Mucosa of descending colon (tissue), 3 donors: ENCODE measurements at regions of chr6 and their contacts with region 1.

Region 1: DNA sequence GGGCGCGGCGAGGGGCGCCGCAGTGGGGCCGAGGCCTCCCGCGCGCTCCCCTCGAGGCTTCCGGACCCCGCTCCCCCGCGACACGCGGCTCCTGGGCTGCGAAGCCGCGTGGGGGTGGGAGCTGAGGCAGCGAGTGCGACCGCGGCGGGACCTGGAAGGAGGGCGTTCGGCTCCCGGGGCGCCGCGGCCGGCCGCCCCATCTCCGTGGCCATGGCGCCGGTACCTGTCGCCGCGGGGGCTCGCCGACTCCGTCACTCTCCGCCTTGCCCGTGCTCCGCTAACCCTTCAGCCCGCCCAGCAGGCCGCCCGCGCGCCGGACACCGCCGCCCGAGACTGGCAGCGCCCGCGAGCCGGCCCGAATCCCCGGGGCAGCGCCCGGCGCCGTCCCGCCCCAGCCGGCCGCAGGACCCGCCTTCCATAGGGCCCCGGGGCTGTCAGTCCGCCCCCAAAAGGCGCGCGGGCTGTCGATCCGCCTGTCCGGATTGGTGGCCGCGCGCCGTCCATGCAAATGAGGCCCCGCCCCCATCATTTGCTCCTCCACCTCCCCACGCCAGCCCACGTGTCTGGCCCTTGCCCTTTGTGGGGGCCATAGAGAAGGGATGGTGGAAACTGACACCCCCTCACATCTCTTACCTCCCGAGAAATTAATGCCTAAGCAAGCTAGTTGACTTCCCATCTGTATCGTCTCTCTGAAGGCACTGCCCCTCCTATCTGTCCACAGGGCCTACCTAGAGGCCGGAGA is at the start of gene FKBP5:
- DNase-seq: peak; percentile 96 to 98 (median 96)
- ATAC-seq: peak; percentile 93
- H3K4me3 ChIP-seq: peak within 1 kb of the TSS; percentile 93
- H3K4me1 ChIP-seq: peaks cover 6% of the 10 kb centered on the region
- CTCF ChIP-seq: no peak
- total RNA-seq, gene FKBP5: 22.1 to 174 (median 150) TPM

Region 2: GRCh38 chr6:35727935-35728682 is 39.4 kb after region 1 on chr6:
- intact Hi-C with region 1: loop called in 1 of 2 experiments (anchors 2 kb)
- DNase-seq: peak; percentile 92 to 98 (median 94)
- ATAC-seq: peak; percentile 57
- H3K4me3 ChIP-seq: no peak overlapping the region
- H3K4me1 ChIP-seq: peaks cover 87% of the 10 kb centered on the region
- CTCF ChIP-seq: no peak

Region 3: GRCh38 chr6:35893246-35893645 is 204.5 kb after region 1 on chr6:
- intact Hi-C with region 1: no loop called
- DNase-seq: no peak
- ATAC-seq: no peak
- H3K4me3 ChIP-seq: no peak overlapping the region
- H3K4me1 ChIP-seq: no peaks in the 10 kb centered on the region
- CTCF ChIP-seq: no peak

Region 4: DNA sequence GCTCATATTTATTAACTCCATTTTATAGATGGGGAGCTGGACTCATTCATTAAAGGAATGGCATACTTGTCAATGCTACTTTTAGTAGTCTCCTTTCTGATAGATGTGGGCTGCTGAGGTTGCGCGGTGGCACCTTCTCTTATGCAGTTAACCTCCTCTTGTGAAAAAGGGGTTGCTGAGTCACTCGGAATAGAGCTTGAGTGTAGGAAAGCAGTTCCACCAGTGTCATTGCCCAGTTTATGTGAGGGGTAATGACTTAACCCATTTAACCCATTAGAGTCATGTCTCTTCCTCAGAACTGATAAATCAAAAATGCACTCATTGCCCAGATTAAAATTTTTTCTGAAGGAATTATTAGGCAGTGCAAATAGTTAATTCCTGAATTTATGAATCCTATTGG is 345.2 kb after region 1 on chr6:
- intact Hi-C with region 1: no loop called
- DNase-seq: no peak
- ATAC-seq: no peak
- H3K4me3 ChIP-seq: no peak overlapping the region
- H3K4me1 ChIP-seq: peaks cover 11% of the 10 kb centered on the region
- CTCF ChIP-seq: no peak